Transverse colon (tissue), 4 donors: ENCODE measurements at regions of chr20 and their contacts with region 1.

Region 1: DNA sequence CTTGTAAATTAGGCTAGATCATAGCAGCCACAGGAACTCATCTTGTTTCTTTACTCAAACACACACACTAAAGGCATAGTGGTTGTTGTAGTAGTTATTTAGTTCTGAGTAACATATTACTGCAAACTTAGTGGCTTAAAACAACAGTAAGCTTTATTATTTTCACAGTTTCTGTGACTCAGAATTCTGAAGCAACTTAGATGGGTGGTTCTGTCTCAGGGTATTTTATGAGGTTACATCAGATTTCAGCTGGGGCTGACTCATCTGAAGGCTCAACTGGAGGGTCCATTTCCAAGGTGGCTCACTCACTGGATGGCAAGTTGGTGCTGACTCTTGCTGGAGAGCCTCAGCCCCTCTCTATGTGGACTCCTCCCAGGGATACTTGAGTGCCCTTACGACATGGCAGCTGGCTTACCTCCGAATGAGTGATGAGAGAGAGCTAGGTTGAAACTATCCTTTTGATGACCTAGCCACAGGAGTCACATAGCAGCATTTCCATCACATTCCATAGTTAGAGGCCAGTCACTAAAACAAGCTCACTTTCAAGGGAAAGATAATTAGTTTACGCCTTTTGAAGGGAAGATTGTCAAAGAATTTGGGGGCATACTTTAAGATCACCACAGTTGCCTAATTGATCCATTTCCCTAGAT is 136.5 kb upstream of the PRND start:
- DNase-seq: no peak
- H3K4me3 ChIP-seq: no peak overlapping the region
- H3K27ac ChIP-seq: no peak overlapping the region
- H3K4me1 ChIP-seq: no peaks in the 10 kb centered on the region
- H3K27me3 ChIP-seq: no peaks in the 10 kb centered on the region
- CTCF ChIP-seq: no peak
- EP300 ChIP-seq: no peak
- POLR2A ChIP-seq: no peak

Region 2: DNA sequence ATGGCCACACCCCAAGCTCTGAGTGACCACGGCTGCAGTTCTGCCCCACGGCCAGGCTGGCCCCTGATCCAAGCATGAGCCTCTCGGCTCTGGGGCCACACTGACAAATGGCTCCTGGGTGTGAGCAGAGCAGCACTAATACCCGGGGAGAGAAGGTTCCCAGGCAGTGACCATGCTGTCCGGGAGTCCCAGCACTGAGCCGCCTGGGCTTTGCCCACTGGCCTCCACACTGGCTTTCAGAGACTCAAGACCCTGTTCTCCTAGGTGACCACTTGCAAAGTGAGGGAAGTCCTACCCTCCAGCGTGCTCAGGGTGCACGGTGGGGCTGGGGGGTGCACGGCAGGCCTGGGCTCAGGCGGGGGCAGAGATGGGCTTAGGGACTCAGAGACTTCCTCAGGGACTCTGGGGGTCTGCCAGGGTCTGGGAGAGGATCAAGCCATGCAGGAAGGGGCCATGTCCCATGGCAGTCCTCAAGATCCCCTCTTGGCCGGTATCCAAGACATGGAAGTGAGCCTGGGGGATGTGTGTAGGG is 349.7 kb before region 1 on chr20:
- in situ Hi-C with region 1: loop called in 1 of 4 experiments (anchors 5 kb)
- intact Hi-C with region 1: no loop called
- DNase-seq: no peak
- H3K4me3 ChIP-seq: no peak overlapping the region
- H3K27ac ChIP-seq: no peak overlapping the region
- H3K4me1 ChIP-seq: no peaks in the 10 kb centered on the region
- H3K27me3 ChIP-seq: peaks cover 4% of the 10 kb centered on the region
- CTCF ChIP-seq: no peak
- EP300 ChIP-seq: no peak
- POLR2A ChIP-seq: no peak

Region 3: DNA sequence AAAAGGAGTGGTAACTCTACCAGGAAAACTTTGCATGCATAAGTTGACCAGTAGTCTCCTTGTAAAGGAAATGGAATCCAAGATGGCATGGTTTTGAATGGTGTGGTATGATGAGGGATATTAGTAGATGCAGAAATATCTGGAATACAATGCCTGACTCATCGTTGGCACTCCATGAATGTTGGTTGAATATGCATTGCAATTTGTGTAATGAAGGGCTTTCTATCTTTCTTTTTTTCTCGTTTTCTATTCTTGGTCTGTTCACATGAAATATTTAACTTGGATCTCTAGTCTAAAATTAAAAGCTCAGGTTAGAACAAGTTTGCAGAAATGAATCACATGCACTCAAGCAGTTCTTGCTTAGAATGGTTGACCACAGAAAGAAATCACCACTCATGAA is 140.8 kb before region 1 on chr20:
- in situ Hi-C with region 1: no loop called
- intact Hi-C with region 1: no loop called
- DNase-seq: no peak
- H3K4me3 ChIP-seq: no peak overlapping the region
- H3K27ac ChIP-seq: no peak overlapping the region
- H3K4me1 ChIP-seq: no peaks in the 10 kb centered on the region
- H3K27me3 ChIP-seq: no peaks in the 10 kb centered on the region
- CTCF ChIP-seq: no peak
- EP300 ChIP-seq: no peak
- POLR2A ChIP-seq: no peak

Region 4: GRCh38 chr20:4457566-4458543 is 127.4 kb before region 1 on chr20:
- in situ Hi-C with region 1: no loop called
- intact Hi-C with region 1: no loop called
- DNase-seq: no peak
- H3K4me3 ChIP-seq: no peak overlapping the region
- H3K27ac ChIP-seq: no peak overlapping the region
- H3K4me1 ChIP-seq: no peaks in the 10 kb centered on the region
- H3K27me3 ChIP-seq: no peaks in the 10 kb centered on the region
- CTCF ChIP-seq: no peak
- EP300 ChIP-seq: no peak
- POLR2A ChIP-seq: no peak

Region 5: DNA sequence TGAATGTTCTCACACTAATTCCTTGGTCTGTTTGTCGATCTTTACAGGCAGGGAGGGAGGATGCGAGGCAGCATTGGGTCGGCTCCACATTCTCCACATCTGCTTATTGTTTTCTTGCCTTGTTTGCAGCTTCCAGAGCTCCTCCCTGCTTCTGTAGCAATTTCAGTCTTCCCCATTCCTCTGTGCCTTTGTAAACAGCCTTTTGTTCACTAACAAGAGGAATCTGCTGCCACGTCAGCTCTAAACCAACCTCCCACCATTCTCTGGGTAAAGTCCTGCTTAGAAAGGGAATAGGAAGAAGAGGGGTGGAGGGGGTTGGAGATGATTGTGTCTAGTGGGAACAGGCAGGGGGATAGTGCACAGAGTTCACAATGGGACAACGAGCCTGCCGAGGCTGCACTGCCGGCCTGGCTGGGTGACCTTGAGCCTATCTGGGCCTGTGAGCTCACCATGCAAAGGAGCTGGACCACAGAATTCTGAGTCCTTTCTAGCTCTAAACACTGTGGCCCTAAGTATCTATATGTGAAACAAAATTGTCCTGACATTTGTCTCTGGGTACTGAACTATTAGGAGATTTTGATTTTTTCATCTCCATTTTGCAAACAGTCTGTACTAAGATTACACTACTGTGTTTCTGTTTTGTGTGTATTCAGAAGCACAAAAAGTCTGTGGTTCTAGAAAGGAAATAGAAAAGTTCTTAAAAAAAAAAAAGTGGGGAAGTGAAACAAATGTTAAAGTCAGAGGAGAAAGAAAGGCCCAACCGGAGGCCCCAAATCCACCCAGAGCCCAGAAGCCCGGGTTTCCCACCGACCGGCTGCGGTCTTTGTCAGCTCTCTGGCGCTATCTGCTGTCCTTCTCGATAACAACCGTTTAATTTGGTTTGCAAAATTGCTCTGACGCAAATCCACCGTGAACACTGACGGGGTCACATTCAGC is 135.1 kb after region 1 on chr20:
- in situ Hi-C with region 1: no loop called
- intact Hi-C with region 1: no loop called
- DNase-seq: peak; percentile 83
- H3K4me3 ChIP-seq: no peak overlapping the region
- H3K27ac ChIP-seq: peak overlapping the region; percentile 56 to 81 (median 61)
- H3K4me1 ChIP-seq: peaks cover 0 to 4% (median 4%) of the 10 kb centered on the region in 4 donors
- H3K27me3 ChIP-seq: no peaks in the 10 kb centered on the region
- CTCF ChIP-seq: peak; percentile 64 to 81 (median 66)
- EP300 ChIP-seq: no peak
- POLR2A ChIP-seq: no peak